IMR-90 (cell line): ENCODE measurements at regions of chr12 and their contacts with region 1.

Region 1: GRCh38 chr12:18224745-18225144 is 36.6 kb upstream of the PIK3C2G start:
- DNase-seq: peak; percentile 5
- ATAC-seq: peak; percentile 64; the same call in 1 of the 2 replicates
- H3K4me3 ChIP-seq: no peak overlapping the region
- H3K27ac ChIP-seq: no peak overlapping the region
- H3K4me1 ChIP-seq: no peaks in the 10 kb centered on the region
- H3K27me3 ChIP-seq: no peaks in the 10 kb centered on the region
- CTCF ChIP-seq: peak; percentile 28; the same call in 1 of the 2 replicates
- POLR2A ChIP-seq: no peak
- RAD21 ChIP-seq: peak; percentile 34; the same call in 1 of the 2 replicates

Region 2: DNA sequence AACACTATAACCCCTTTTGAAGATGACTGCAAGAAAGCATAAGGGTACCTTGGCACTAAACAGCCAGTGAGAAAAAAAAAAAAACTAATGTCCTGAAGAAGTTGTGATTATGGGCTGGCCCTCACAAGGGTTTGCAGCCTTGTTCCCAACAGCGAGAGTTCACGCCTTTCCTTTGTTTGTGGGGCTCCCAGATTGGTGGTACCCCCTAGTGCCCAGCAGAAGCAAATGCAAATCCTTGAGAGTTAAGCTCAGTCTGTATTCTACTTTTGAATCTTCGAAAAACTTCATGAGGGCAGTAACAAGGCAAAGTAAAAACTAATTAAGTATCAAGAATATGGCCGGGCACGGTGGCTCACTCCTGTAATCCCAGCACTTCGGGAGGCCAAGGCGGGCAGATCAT is 1379.9 kb before region 1 on chr12:
- CTCF ChIA-PET with region 1: interaction called, 12 read pairs
- POLR2A ChIA-PET with region 1: no interaction called
- dilution Hi-C with region 1: no loop called
- in situ Hi-C with region 1: no loop called
- intact Hi-C with region 1: no loop called
- DNase-seq: no peak
- ATAC-seq: no peak
- H3K4me3 ChIP-seq: no peak overlapping the region
- H3K27ac ChIP-seq: no peak overlapping the region
- H3K4me1 ChIP-seq: no peaks in the 10 kb centered on the region
- H3K27me3 ChIP-seq: no peaks in the 10 kb centered on the region
- CTCF ChIP-seq: no peak
- POLR2A ChIP-seq: no peak
- RAD21 ChIP-seq: no peak

Region 3: GRCh38 chr12:17691369-17691768 is 533.4 kb before region 1 on chr12:
- CTCF ChIA-PET with region 1: no interaction called
- POLR2A ChIA-PET with region 1: no interaction called
- dilution Hi-C with region 1: no loop called
- in situ Hi-C with region 1: no loop called
- intact Hi-C with region 1: no loop called
- DNase-seq: no peak
- ATAC-seq: no peak
- H3K4me3 ChIP-seq: no peak overlapping the region
- H3K27ac ChIP-seq: no peak overlapping the region
- H3K4me1 ChIP-seq: no peaks in the 10 kb centered on the region
- H3K27me3 ChIP-seq: no peaks in the 10 kb centered on the region
- CTCF ChIP-seq: no peak
- POLR2A ChIP-seq: no peak
- RAD21 ChIP-seq: no peak

Region 4: DNA sequence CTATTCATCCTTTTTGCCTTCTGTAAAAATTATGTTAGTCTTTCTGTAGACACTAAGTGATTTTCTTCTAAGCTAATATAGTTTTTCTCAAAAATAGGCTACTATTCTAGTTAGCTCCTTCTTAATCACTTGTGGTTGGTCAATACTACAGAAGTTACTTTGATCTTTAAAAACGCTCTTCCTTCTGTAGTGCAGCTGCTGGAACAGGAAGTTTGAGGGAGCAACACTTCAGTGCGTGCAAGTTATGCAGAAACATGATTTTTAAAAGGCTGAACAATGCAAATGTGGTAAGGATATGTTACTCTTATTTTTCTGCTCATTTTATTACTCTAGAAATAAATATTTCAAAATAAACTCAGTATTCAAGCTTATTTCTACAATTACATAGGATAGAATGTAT is 123.7 kb before region 1 on chr12:
- CTCF ChIA-PET with region 1: no interaction called
- POLR2A ChIA-PET with region 1: no interaction called
- dilution Hi-C with region 1: no loop called
- in situ Hi-C with region 1: no loop called
- intact Hi-C with region 1: no loop called
- DNase-seq: no peak
- ATAC-seq: no peak
- H3K4me3 ChIP-seq: no peak overlapping the region
- H3K27ac ChIP-seq: no peak overlapping the region
- H3K4me1 ChIP-seq: no peaks in the 10 kb centered on the region
- H3K27me3 ChIP-seq: no peaks in the 10 kb centered on the region
- CTCF ChIP-seq: no peak
- POLR2A ChIP-seq: no peak
- RAD21 ChIP-seq: no peak

Region 5: DNA sequence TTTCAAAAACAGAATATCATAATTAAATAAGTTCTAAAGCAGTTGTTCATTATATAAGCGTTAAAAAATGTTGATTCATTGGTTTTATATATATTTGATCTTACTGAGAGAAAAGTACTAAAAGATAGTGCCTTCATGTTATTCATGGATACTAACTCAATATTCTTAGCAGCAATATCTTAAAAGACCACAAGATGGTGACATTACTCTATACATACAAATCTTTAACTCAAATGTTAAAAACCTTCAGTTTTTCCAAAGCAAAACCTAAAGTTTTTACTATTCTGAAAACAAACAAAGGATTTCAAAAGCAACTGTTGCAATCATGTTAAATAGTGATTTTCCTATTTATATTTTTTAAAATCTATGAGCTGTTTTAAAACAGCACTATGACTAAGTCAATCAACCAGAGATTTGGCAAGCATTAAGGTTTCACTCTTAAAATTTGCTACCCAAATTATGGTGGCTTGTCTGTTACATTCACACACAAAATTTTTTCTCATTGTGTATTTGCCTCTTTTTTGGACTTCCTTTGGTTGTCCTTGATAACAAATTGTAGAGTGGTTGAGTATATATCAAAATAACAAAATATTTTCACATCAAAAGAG is 84.7 kb before region 1 on chr12:
- CTCF ChIA-PET with region 1: no interaction called
- POLR2A ChIA-PET with region 1: no interaction called
- dilution Hi-C with region 1: no loop called
- in situ Hi-C with region 1: no loop called
- intact Hi-C with region 1: loop called (anchors 1 kb)
- DNase-seq: peak; percentile 27
- ATAC-seq: peak; percentile 48; the same call in 1 of the 2 replicates
- H3K4me3 ChIP-seq: no peak overlapping the region
- H3K27ac ChIP-seq: no peak overlapping the region
- H3K4me1 ChIP-seq: no peaks in the 10 kb centered on the region
- H3K27me3 ChIP-seq: no peaks in the 10 kb centered on the region
- CTCF ChIP-seq: peak; percentile 53
- POLR2A ChIP-seq: no peak
- RAD21 ChIP-seq: peak; percentile 49

Region 6: DNA sequence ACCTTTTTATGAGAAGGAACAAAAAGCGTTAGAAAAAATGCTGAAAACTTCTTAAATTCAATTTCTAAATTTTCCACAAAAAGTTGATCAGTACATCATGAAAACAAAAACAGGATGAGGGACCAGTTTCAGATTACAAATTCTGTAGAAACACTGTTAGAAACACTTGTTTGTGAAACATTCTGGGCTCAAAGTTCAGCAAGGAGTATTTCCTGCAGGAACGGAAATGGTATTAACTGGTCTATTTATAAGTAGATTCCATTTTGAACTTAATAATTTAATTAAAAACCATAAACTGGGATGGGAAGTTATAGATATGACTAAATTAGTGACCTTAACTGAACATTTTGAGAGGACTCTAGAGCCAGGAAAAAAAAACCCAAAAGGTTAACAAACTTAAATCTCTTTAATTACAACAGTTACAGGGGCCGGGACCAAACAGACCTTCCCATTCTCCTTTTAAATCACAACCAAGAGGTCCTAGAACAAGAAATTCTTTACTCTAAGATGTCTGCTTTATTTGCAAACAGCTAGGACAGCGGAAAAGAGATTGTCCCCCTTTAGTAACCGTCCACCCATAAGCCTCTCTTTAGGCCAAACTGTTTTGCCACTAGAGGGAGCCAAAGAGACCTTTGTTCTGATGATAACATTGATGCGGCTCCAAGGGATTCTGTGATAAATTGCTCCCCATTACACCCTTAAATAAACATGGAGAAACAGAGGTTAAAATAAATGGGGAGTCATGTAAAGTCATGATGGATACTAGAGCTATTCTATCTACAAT is 65.8 kb before region 1 on chr12:
- CTCF ChIA-PET with region 1: no interaction called
- POLR2A ChIA-PET with region 1: no interaction called
- dilution Hi-C with region 1: no loop called
- in situ Hi-C with region 1: no loop called
- intact Hi-C with region 1: loop called (anchors 1 kb)
- DNase-seq: peak; percentile 25
- ATAC-seq: peak; percentile 54; the same call in 1 of the 2 replicates
- H3K4me3 ChIP-seq: no peak overlapping the region
- H3K27ac ChIP-seq: no peak overlapping the region
- H3K4me1 ChIP-seq: no peaks in the 10 kb centered on the region
- H3K27me3 ChIP-seq: no peaks in the 10 kb centered on the region
- CTCF ChIP-seq: peak; percentile 48
- POLR2A ChIP-seq: no peak
- RAD21 ChIP-seq: 0 out of 2 replicates have a peak, but pooled peaks have one; percentile 13

Region 7: DNA sequence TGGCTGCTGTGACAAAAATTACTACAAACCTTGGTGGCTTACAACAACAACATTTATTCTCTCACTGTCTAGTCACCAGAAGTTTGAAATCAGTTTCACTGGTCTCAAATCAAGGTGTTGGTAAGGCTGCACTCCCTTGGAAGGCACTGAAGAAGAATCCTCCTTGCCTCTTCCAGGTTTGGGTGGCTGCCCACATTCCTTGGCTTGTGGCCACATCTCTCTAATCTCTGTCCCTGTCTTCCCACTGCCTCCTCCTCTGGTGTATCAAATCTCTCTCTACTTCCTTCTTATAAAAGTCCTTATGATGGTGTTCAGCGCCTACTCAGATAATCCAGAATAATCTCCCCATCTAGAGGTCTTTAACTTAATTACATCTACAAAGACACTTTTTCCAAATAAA is 482.1 kb after region 1 on chr12:
- CTCF ChIA-PET with region 1: no interaction called
- POLR2A ChIA-PET with region 1: no interaction called
- dilution Hi-C with region 1: no loop called
- in situ Hi-C with region 1: no loop called
- intact Hi-C with region 1: no loop called
- DNase-seq: no peak
- ATAC-seq: no peak
- H3K4me3 ChIP-seq: no peak overlapping the region
- H3K27ac ChIP-seq: no peak overlapping the region
- H3K4me1 ChIP-seq: no peaks in the 10 kb centered on the region
- H3K27me3 ChIP-seq: no peaks in the 10 kb centered on the region
- CTCF ChIP-seq: no peak
- POLR2A ChIP-seq: no peak
- RAD21 ChIP-seq: no peak